ENCODE measurements at regions of chr6 and their contacts with region 1.

Region 1: DNA sequence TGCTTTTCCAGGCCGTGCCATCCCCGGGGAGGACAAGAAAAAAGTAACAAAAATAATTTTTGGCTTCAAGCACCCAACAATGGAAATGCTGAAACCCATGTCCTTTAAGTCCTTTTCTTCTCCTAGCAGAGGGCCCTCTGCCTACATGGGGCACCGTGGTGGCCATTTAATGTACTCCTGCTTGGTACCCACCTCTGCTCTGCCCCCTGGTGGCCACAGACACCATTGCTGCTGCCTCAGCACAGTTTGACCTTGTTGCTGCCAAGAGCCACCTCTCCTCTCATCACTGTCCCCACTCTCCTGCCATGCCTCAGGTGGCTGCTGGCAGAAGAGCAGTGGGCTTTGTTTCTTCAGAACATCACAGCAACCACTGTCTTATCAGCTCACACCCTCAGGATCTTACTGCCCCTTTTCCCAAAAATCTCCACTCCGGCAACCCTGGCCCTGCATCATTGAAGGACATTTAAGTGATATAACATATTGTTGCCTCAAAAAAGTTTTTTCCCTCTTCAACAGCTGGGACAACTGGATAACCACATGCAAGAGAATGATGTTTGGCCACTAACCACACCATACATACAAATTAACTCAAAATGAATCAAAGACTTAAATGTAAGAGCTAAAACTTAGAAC is 12.9 kb upstream of the ARMC2 start:
- DNase-seq: peak; percentile 95
- ATAC-seq: peak; percentile 96
- H3K4me3 Mint-ChIP-seq: no peak overlapping the region
- H3K27ac Mint-ChIP-seq: no peak overlapping the region
- H3K4me1 Mint-ChIP-seq: peaks cover 19% of the 10 kb centered on the region
- H3K27me3 Mint-ChIP-seq: peaks cover 2% of the 10 kb centered on the region
- CTCF ChIP-seq: peak; percentile 91

Region 2: GRCh38 chr6:108848116-108848868 is 13.0 kb after region 1 on chr6 and contains the start of gene ARMC2:
- CTCF ChIA-PET with region 1: interaction called, 16 read pairs
- POLR2A ChIA-PET with region 1: no interaction called
- intact Hi-C with region 1: no loop called
- DNase-seq: peak; percentile 86
- ATAC-seq: peak; percentile 95
- H3K4me3 Mint-ChIP-seq: peak within 1 kb of the TSS; percentile 75
- H3K27ac Mint-ChIP-seq: peak within 1 kb of the TSS; percentile 75
- H3K4me1 Mint-ChIP-seq: peaks cover 33% of the 10 kb centered on the region
- H3K27me3 Mint-ChIP-seq: no peaks in the 10 kb centered on the region
- CTCF ChIP-seq: no peak
- total RNA-seq, gene ARMC2: 2.7 to 4.6 TPM

Region 3: GRCh38 chr6:108883172-108883571 is 47.8 kb after region 1 on chr6:
- CTCF ChIA-PET with region 1: interaction called, 10 read pairs
- POLR2A ChIA-PET with region 1: no interaction called
- intact Hi-C with region 1: no loop called
- DNase-seq: no peak
- ATAC-seq: peak; percentile 89
- H3K4me3 Mint-ChIP-seq: no peak overlapping the region
- H3K27ac Mint-ChIP-seq: peak overlapping the region; percentile 72
- H3K4me1 Mint-ChIP-seq: peaks cover 24% of the 10 kb centered on the region
- H3K27me3 Mint-ChIP-seq: no peaks in the 10 kb centered on the region
- CTCF ChIP-seq: no peak

Region 4: DNA sequence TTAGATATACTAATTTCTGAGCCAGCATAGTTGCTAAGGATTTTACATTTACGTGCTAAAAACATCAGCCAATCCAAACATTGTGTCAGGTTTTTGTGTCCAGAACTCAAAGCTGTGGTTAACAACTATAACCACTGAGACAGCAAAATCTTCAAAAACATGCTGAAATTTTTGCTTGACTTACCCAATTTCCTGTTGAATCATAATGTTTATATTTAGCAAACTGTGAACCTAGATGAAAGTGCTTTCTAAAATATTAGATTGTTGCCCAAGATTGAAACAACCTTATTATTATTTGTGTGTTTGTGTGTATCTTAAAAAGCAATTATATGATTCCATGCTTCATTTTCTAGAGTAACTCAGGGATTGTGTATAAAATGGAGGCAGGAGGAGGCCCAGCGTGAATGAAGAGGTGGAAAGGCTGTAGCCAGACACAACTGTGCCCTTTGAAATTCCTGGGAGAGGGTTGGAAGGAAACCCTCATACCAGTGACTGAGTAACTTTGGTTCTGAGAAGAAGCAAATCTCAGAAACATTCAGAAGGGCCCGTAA is 60.9 kb after region 1 on chr6:
- CTCF ChIA-PET with region 1: interaction called, 7 read pairs
- POLR2A ChIA-PET with region 1: no interaction called
- intact Hi-C with region 1: loop called (anchors 5 kb)
- DNase-seq: no peak
- ATAC-seq: peak; percentile 63
- H3K4me3 Mint-ChIP-seq: no peak overlapping the region
- H3K27ac Mint-ChIP-seq: peak overlapping the region; percentile 84
- H3K4me1 Mint-ChIP-seq: peaks cover 25% of the 10 kb centered on the region
- H3K27me3 Mint-ChIP-seq: no peaks in the 10 kb centered on the region
- CTCF ChIP-seq: no peak

Measured in activated CD8-positive, alpha-beta T cell treated with anti-CD3 and anti-CD28 coated beads for 36 hours (primary cell).